ENCODE measurements at regions of chr5 and their contacts with region 1.

Region 1: DNA sequence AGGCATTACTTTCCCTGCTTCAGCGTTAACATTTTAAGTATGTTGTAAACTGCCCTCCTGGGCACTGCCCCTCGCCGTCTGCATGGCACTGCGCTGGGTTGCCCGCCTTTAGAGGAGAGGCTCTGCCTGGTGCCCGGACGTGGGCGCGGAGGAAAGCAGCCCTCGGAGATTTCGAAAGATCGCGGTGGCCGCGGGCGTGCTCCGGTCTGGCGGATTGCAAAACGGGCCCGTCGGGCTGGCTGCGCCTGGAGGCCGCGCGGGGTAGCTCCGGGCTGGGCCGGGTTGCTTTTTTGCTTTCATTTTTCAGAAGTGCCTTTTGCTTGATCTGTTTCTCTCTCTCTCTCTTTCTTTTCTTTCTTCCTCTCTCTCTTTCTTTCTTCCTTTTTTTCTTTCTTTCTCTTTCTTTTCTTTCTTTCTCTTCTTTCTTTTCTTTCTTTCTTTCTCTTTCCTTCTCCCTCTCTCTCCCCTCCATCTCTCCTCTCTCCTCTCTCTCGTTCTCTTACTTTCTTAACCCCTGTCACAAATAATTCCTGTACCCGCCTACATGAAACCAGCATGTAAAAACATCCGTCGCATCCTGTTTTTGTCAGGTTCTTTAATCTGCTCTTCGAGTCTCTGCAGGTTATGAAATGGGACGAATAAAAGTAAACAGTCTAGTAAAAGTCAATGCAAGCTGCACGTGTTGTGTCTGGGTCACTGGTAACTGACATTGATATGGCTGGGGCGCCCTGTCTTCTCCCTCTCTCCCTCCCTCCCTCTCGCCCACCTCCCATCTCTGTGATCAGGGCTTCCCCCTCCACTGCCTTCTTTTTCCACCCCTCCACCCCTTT is 1.7 kb downstream of the FST start:
- DNase-seq: peak in 40 of 42 donors; percentile 13 to 78 (median 56)

Region 2: GRCh38 chr5:53430261-53431252 is 51.5 kb before region 1 on chr5:
- intact Hi-C with region 1: no loop called
- DNase-seq: peak in 1 of 42 donors; percentile 2

Region 3: DNA sequence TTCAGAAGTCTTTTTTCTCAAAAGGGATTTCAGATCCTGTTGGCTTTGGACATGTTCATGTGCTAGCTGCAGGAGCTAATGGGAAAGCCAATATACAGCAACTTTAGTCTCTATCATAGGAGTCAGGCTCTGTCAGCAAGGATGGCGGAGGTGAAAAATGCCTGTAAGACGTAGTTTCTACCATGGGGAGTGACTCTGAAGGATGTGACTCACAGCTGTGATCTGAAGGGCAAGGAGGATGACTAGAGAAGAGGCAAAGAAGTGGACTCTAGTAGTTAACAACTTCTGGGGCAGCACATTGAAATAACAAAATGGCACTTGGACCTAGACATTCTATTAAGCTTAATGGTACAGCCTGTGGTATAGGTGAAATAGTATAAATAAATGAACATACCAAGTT is 75.3 kb after region 1 on chr5:
- intact Hi-C with region 1: loop called (anchors 10 kb)
- DNase-seq: no peak

Region 4: GRCh38 chr5:54229041-54229780 is 747.1 kb after region 1 on chr5:
- intact Hi-C with region 1: loop called (anchors 10 kb)
- DNase-seq: peak; percentile 38 to 92 (median 80)

Measured in head of caudate nucleus (tissue), 42 donors.